GM12878 (cell line): ENCODE measurements at regions of chr10 and their contacts with region 1.

Region 1: GRCh38 chr10:34446049-34446448 is 369.0 kb downstream of the PARD3 start:
- DNase-seq: no peak
- ATAC-seq: no peak
- H3K4me3 ChIP-seq: no peak overlapping the region
- H3K27ac ChIP-seq: no peak overlapping the region
- H3K4me1 ChIP-seq: no peaks in the 10 kb centered on the region
- H3K27me3 ChIP-seq: no peaks in the 10 kb centered on the region
- CTCF ChIP-seq: no peak
- EP300 ChIP-seq: no peak
- POLR2A ChIP-seq: no peak
- RAD21 ChIP-seq: no peak

Region 2: DNA sequence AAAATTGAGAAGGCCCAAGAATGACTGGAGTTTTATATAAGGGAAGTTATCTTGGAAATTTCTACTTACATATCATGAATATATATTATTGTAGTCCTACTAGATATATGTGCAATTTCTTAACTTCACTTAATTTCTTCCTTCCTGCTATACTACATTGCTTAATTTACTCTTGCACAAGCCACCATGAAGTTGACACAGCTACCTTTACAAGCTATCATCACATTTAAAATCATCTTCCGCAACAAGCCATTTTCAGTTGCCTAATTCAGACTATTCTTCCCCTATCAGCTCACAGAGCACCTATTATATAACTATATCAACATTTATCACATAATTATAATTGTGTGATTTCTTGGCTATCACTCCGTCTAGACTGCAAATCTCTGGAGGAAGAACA is 49.4 kb before region 1 on chr10:
- CTCF ChIA-PET with region 1: no interaction called
- POLR2A ChIA-PET with region 1: no interaction called
- RAD21 ChIA-PET with region 1: no interaction called
- SMC1A ChIA-PET with region 1: no interaction called
- in situ Hi-C with region 1: no loop called
- intact Hi-C with region 1: no loop called
- DNase-seq: no peak
- ATAC-seq: no peak
- H3K4me3 ChIP-seq: no peak overlapping the region
- H3K27ac ChIP-seq: no peak overlapping the region
- H3K4me1 ChIP-seq: no peaks in the 10 kb centered on the region
- H3K27me3 ChIP-seq: no peaks in the 10 kb centered on the region
- CTCF ChIP-seq: no peak
- EP300 ChIP-seq: no peak
- POLR2A ChIP-seq: no peak
- RAD21 ChIP-seq: no peak

Region 3: GRCh38 chr10:34408956-34409355 is 37.1 kb before region 1 on chr10:
- CTCF ChIA-PET with region 1: interaction called, 3 read pairs
- POLR2A ChIA-PET with region 1: no interaction called
- RAD21 ChIA-PET with region 1: interaction called, 3 read pairs
- SMC1A ChIA-PET with region 1: interaction called, 18 read pairs
- in situ Hi-C with region 1: no loop called
- intact Hi-C with region 1: no loop called
- DNase-seq: no peak
- ATAC-seq: no peak
- H3K4me3 ChIP-seq: no peak overlapping the region
- H3K27ac ChIP-seq: no peak overlapping the region
- H3K4me1 ChIP-seq: no peaks in the 10 kb centered on the region
- H3K27me3 ChIP-seq: no peaks in the 10 kb centered on the region; a peak in 1 of 4 replicates
- CTCF ChIP-seq: no peak
- EP300 ChIP-seq: no peak
- POLR2A ChIP-seq: no peak
- RAD21 ChIP-seq: no peak

Region 4: DNA sequence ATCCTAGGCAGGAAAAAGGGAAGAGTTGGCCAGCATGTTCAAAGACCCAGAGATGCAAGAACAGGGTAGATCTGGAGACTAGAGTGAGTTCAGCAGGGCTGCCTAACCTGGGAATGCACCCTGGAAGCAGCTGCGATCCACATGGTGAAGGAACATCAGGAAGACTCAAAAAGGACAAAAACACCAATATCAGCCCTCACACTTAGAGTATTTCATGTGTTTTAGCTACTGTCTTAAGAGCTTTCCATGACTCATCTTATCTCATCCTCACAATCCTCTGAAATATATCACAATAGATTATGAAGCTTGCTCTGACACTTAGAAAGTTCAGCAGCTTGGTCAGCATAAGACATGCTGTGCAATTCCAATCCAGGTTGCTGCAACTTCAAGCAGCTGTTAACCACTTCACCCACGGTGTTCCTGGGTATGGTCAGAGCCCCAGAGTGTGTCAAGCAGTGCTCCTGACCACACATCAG is 11.9 kb before region 1 on chr10:
- CTCF ChIA-PET with region 1: interaction called, 4 read pairs
- POLR2A ChIA-PET with region 1: interaction called, 5 read pairs
- RAD21 ChIA-PET with region 1: interaction called, 26 read pairs
- SMC1A ChIA-PET with region 1: interaction called, 11 read pairs
- in situ Hi-C with region 1: no loop called
- intact Hi-C with region 1: no loop called
- DNase-seq: no peak
- ATAC-seq: peak; percentile 35
- H3K4me3 ChIP-seq: no peak overlapping the region
- H3K27ac ChIP-seq: no peak overlapping the region
- H3K4me1 ChIP-seq: no peaks in the 10 kb centered on the region
- H3K27me3 ChIP-seq: no peaks in the 10 kb centered on the region
- CTCF ChIP-seq: no peak
- EP300 ChIP-seq: no peak
- POLR2A ChIP-seq: no peak
- RAD21 ChIP-seq: no peak

Region 5: GRCh38 chr10:34462056-34462455 is 16.0 kb after region 1 on chr10:
- CTCF ChIA-PET with region 1: interaction called, 6 read pairs
- POLR2A ChIA-PET with region 1: no interaction called
- RAD21 ChIA-PET with region 1: interaction called, 4 read pairs
- SMC1A ChIA-PET with region 1: interaction called, 7 read pairs
- in situ Hi-C with region 1: no loop called
- intact Hi-C with region 1: loop called (anchors 2 kb)
- DNase-seq: no peak
- ATAC-seq: no peak
- H3K4me3 ChIP-seq: no peak overlapping the region
- H3K27ac ChIP-seq: no peak overlapping the region
- H3K4me1 ChIP-seq: no peaks in the 10 kb centered on the region
- H3K27me3 ChIP-seq: no peaks in the 10 kb centered on the region
- CTCF ChIP-seq: no peak
- EP300 ChIP-seq: no peak
- POLR2A ChIP-seq: no peak
- RAD21 ChIP-seq: no peak